Head of caudate nucleus (tissue), 42 donors: ENCODE measurements at regions of chr4 and their contacts with region 1.

Region 1: DNA sequence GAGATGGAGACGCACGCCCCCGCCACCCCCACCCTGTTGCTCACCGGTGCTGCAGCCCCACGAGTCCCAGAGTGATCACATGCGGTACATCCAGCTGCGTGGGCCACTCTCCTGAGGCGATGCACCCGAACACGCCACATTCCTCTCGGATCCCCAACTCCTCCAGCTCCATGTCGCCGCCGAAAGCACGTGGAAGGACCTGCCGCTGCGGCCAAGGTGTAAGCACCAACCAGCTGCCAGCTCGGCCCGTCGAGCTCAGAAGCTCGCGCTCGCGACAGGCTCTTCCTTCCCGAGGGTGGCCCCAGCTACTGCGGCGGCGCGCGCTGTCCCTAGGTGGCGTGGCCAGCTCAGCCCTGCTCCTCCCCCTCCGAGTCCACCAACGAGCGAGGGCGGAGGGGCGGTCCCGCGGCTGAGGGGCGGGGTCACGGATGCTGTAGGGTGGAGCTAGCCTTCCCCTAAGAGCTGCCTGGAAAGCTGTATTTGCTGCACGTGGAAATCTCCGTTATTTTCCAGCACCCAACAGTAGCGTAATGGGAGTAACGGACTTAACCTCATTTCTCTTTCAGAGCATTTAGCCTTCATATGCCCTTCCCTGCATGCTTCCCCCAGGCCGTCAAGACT is at the start of gene PPAT:
- DNase-seq: peak; percentile 92 to 99 (median 97)

Region 2: DNA sequence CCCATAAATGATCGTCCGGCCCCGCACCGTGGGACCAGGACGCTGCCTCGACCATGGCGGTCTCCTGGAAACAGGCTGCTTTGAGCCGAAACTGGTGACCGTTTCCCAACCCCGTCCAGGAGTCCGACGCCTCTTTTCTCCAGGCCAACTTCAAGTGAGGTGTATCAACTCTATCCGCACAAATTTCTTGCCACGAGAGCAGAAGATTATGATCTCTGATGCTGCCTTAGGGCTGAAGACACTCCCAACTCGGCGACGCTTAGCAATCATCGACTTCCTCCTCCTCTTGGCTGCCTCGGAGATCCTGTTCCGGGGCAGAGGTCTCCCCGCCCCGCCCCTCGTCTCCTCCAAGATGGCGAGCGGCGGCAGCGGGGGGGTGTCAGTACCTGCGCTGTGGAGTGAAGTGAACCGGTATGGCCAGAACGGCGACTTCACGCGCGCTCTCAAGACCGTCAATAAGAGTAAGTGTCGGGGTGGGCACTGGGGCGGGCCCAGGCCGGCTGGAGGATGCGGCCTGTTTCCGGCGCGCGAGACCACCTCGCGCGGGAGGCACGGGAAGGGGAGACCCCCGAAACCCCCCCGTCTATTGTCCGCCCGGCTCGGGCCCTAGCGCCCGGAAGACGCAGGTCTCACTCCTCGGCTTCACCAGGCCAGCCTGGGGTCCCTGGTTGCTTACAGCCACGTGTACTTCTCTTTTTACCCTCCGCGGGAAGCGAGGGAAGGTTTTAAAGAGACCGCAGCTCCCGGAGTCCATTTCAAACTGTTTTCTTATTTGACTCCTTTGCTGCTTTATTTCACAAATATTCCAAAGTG is 32.1 kb after region 1 on chr4 and contains the start of gene SRP72:
- intact Hi-C with region 1: loop called (anchors 2 kb)
- DNase-seq: peak; percentile 82 to 97 (median 92)

Region 3: GRCh38 chr4:56530269-56531148 is 95.1 kb after region 1 on chr4:
- intact Hi-C with region 1: loop called (anchors 10 kb)
- DNase-seq: peak; percentile 60 to 96 (median 86)

Region 4: GRCh38 chr4:56907489-56908205 is 472.2 kb after region 1 on chr4 and contains the start of gene REST:
- intact Hi-C with region 1: loop called (anchors 5 kb)
- DNase-seq: peak; percentile 12 to 87 (median 70)